Naive thymus-derived CD4-positive, alpha-beta T cell (primary cell): ENCODE measurements at regions of chr16 and their contacts with region 1.

Region 1: GRCh38 chr16:23640931-23641765 is at the starts of genes DCTN5 and PALB2:
- DNase-seq: peak; percentile 68 to 89 (median 72)
- ATAC-seq: peak; percentile 99
- H3K4me3 ChIP-seq: peak within 1 kb of the TSS; percentile 87
- H3K4me3 Mint-ChIP-seq: peak within 1 kb of the TSS; percentile 96 to 99 (median 99)
- H3K27ac ChIP-seq: peak within 1 kb of the TSS; percentile 84
- H3K27ac Mint-ChIP-seq: peak within 1 kb of the TSS; percentile 94 to 99 (median 98)
- H3K4me1 ChIP-seq: peaks cover 7 to 24% of the 10 kb centered on the region in 2 donors
- H3K4me1 Mint-ChIP-seq: peaks cover 17 to 56% (median 48%) of the 10 kb centered on the region in 7 donors
- H3K27me3 ChIP-seq: no peaks in the 10 kb centered on the region
- H3K27me3 Mint-ChIP-seq: no peaks in the 10 kb centered on the region
- total RNA-seq, gene DCTN5: 42.4 to 100 (median 54.0) TPM
- total RNA-seq, gene PALB2: 6.2 to 27.2 (median 14.4) TPM

Region 2: GRCh38 chr16:23149349-23149996 is 491.7 kb before region 1 on chr16 and contains the start of gene USP31:
- CTCF ChIA-PET with region 1: no interaction called
- POLR2A ChIA-PET with region 1: no interaction called
- intact Hi-C with region 1: loop called (anchors 2 to 5 kb)
- DNase-seq: peak; percentile 77 to 89 (median 85)
- ATAC-seq: peak; percentile 97
- H3K4me3 ChIP-seq: peak within 1 kb of the TSS; percentile 93
- H3K4me3 Mint-ChIP-seq: peak within 1 kb of the TSS; percentile 92 to 98 (median 96)
- H3K27ac ChIP-seq: peak within 1 kb of the TSS; percentile 53
- H3K27ac Mint-ChIP-seq: peak within 1 kb of the TSS; percentile 37 to 92 (median 81)
- H3K4me1 ChIP-seq: peaks cover 0 to 6% of the 10 kb centered on the region in 2 donors
- H3K4me1 Mint-ChIP-seq: peaks cover 12 to 25% (median 22%) of the 10 kb centered on the region in 7 donors
- H3K27me3 ChIP-seq: no peaks in the 10 kb centered on the region
- H3K27me3 Mint-ChIP-seq: peaks cover 0 to 12% (median 5%) of the 10 kb centered on the region in 5 donors
- total RNA-seq, gene USP31: 2.7 to 6.0 (median 4.1) TPM

Region 3: GRCh38 chr16:23257637-23258036 is 383.5 kb before region 1 on chr16:
- CTCF ChIA-PET with region 1: no interaction called
- POLR2A ChIA-PET with region 1: no interaction called
- intact Hi-C with region 1: no loop called
- DNase-seq: no peak
- ATAC-seq: no peak
- H3K4me3 ChIP-seq: no peak overlapping the region
- H3K4me3 Mint-ChIP-seq: no peak overlapping the region
- H3K27ac ChIP-seq: no peak overlapping the region
- H3K27ac Mint-ChIP-seq: no peak overlapping the region
- H3K4me1 ChIP-seq: no peaks in the 10 kb centered on the region
- H3K4me1 Mint-ChIP-seq: no peaks in the 10 kb centered on the region
- H3K27me3 ChIP-seq: no peaks in the 10 kb centered on the region
- H3K27me3 Mint-ChIP-seq: peaks cover 0 to 24% (median 12%) of the 10 kb centered on the region in 5 donors

Region 4: GRCh38 chr16:23452572-23453337 is 188.4 kb before region 1 on chr16 and contains the start of gene COG7:
- CTCF ChIA-PET with region 1: no interaction called
- POLR2A ChIA-PET with region 1: no interaction called
- intact Hi-C with region 1: loop called in 1 of 2 experiments (anchors 5 kb)
- DNase-seq: peak; percentile 71 to 88 (median 85)
- ATAC-seq: peak; percentile 94
- H3K4me3 ChIP-seq: peak within 1 kb of the TSS; percentile 92
- H3K4me3 Mint-ChIP-seq: peak within 1 kb of the TSS; percentile 88 to 99 (median 93)
- H3K27ac ChIP-seq: peak within 1 kb of the TSS; percentile 78
- H3K27ac Mint-ChIP-seq: peak within 1 kb of the TSS; percentile 87 to 96 (median 91)
- H3K4me1 ChIP-seq: peaks cover 9 to 10% of the 10 kb centered on the region in 2 donors
- H3K4me1 Mint-ChIP-seq: peaks cover 27 to 44% (median 39%) of the 10 kb centered on the region in 7 donors
- H3K27me3 ChIP-seq: no peaks in the 10 kb centered on the region
- H3K27me3 Mint-ChIP-seq: no peaks in the 10 kb centered on the region
- total RNA-seq, gene COG7: 16.1 to 28.4 (median 22.6) TPM

Region 5: GRCh38 chr16:23510164-23510914 is 130.8 kb before region 1 on chr16 and contains the start of gene GGA2:
- CTCF ChIA-PET with region 1: no interaction called
- POLR2A ChIA-PET with region 1: interaction called, 3 read pairs
- intact Hi-C with region 1: loop called in 1 of 2 experiments (anchors 1 kb)
- DNase-seq: peak; percentile 61 to 84 (median 74)
- ATAC-seq: peak; percentile 96
- H3K4me3 ChIP-seq: peak within 1 kb of the TSS; percentile 73
- H3K4me3 Mint-ChIP-seq: peak within 1 kb of the TSS; percentile 86 to 99 (median 92)
- H3K27ac ChIP-seq: peak within 1 kb of the TSS; percentile 74
- H3K27ac Mint-ChIP-seq: peak within 1 kb of the TSS; percentile 78 to 94 (median 83)
- H3K4me1 ChIP-seq: peaks cover 36 to 50% of the 10 kb centered on the region in 2 donors
- H3K4me1 Mint-ChIP-seq: peaks cover 43 to 65% (median 56%) of the 10 kb centered on the region in 7 donors
- H3K27me3 ChIP-seq: no peaks in the 10 kb centered on the region
- H3K27me3 Mint-ChIP-seq: no peaks in the 10 kb centered on the region
- total RNA-seq, gene GGA2: 99.3 to 138 (median 104) TPM

Region 6: GRCh38 chr16:23556881-23557778 is 84.0 kb before region 1 on chr16 and contains the starts of genes EARS2 and UBFD1:
- CTCF ChIA-PET with region 1: interaction called, 3 read pairs
- POLR2A ChIA-PET with region 1: interaction called, 4 read pairs
- intact Hi-C with region 1: loop called (anchors 1 kb)
- DNase-seq: peak; percentile 91 to 99 (median 95)
- ATAC-seq: peak; percentile 92
- H3K4me3 ChIP-seq: peak within 1 kb of the TSS; percentile 98
- H3K4me3 Mint-ChIP-seq: peak within 1 kb of the TSS; percentile 92 to 97 (median 93)
- H3K27ac ChIP-seq: peak within 1 kb of the TSS; percentile 85
- H3K27ac Mint-ChIP-seq: peak within 1 kb of the TSS; percentile 85 to 96 (median 94)
- H3K4me1 ChIP-seq: peaks cover 15 to 17% of the 10 kb centered on the region in 2 donors
- H3K4me1 Mint-ChIP-seq: peaks cover 14 to 45% (median 36%) of the 10 kb centered on the region in 7 donors
- H3K27me3 ChIP-seq: no peaks in the 10 kb centered on the region
- H3K27me3 Mint-ChIP-seq: no peaks in the 10 kb centered on the region
- total RNA-seq, gene EARS2: 10.6 to 19.2 (median 15.1) TPM
- total RNA-seq, gene UBFD1: 43.4 to 54.4 (median 51.0) TPM

Region 7: DNA sequence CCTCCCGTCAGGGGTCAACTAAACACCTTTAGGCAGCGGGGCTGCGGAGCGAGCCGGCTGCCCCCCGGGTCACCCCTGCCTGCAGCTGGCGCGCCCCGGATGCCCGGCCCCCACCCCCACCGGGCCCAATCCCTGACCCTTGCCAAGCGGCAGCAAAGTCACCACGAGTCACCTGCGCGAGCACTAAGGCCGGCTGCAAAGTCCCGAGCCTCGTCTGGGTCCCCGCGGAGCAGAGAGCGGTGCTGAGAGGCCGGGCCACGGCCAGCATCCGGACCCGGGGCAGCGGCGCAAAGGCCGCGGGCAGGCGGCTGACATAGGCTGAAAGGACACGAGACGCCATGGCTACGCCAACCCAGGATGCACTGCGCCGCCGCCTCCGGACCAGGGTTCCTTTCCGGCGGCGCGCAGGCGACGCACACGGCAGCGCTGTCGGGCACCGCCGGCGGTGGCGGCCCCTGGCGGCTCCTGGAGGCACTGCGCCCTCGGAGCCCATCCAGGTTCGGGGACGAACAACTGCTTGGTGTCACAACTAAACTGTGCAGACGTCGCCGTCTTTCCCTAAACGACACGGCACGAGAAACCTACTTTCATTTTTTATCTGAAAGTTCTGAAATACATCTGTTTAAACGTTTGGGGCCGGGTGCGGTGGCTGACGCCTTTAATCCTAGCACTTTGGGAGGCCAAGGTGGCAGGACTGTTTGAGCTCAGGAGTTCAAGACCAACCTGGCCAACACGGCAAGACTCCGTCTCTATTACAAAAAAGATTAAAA is 45.0 kb before region 1 on chr16 and contains the start of gene NDUFAB1:
- CTCF ChIA-PET with region 1: interaction called, 3 read pairs
- POLR2A ChIA-PET with region 1: interaction called, 3 read pairs
- intact Hi-C with region 1: loop called (anchors 1 kb)
- DNase-seq: peak; percentile 82 to 97 (median 89)
- ATAC-seq: peak; percentile 100
- H3K4me3 ChIP-seq: peak within 1 kb of the TSS; percentile 82
- H3K4me3 Mint-ChIP-seq: peak within 1 kb of the TSS; percentile 74 to 89 (median 84)
- H3K27ac ChIP-seq: peak within 1 kb of the TSS; percentile 94
- H3K27ac Mint-ChIP-seq: peak within 1 kb of the TSS; percentile 65 to 89 (median 83)
- H3K4me1 ChIP-seq: peaks cover 5 to 13% of the 10 kb centered on the region in 2 donors
- H3K4me1 Mint-ChIP-seq: peaks cover 17 to 48% (median 29%) of the 10 kb centered on the region in 7 donors
- H3K27me3 ChIP-seq: no peaks in the 10 kb centered on the region
- H3K27me3 Mint-ChIP-seq: no peaks in the 10 kb centered on the region
- total RNA-seq, gene NDUFAB1: 24.2 to 85.3 (median 38.2) TPM

Region 8: GRCh38 chr16:23678430-23679273 is 37.5 kb after region 1 on chr16 and contains the start of gene PLK1:
- CTCF ChIA-PET with region 1: no interaction called
- POLR2A ChIA-PET with region 1: interaction called, 3 read pairs
- intact Hi-C with region 1: loop called (anchors 1 to 2 kb)
- DNase-seq: peak; percentile 44 to 85 (median 65)
- ATAC-seq: peak; percentile 96
- H3K4me3 ChIP-seq: peak within 1 kb of the TSS; percentile 80
- H3K4me3 Mint-ChIP-seq: peak within 1 kb of the TSS; percentile 61 to 96 (median 84)
- H3K27ac ChIP-seq: peak within 1 kb of the TSS; percentile 39
- H3K27ac Mint-ChIP-seq: peak within 1 kb of the TSS in 4 of 9 donors; percentile 50 to 73 (median 60)
- H3K4me1 ChIP-seq: peaks cover 9 to 10% of the 10 kb centered on the region in 2 donors
- H3K4me1 Mint-ChIP-seq: peaks cover 10 to 44% (median 23%) of the 10 kb centered on the region in 7 donors
- H3K27me3 ChIP-seq: no peaks in the 10 kb centered on the region
- H3K27me3 Mint-ChIP-seq: peaks cover 0 to 9% (median 0%) of the 10 kb centered on the region in 5 donors
- total RNA-seq, gene PLK1: 0.45 to 65.0 (median 3.2) TPM